Natural killer cell (primary cell): ENCODE measurements at regions of chr3 and their contacts with region 1.

Region 1: GRCh38 chr3:185764163-185764979 is 60.5 kb downstream of the IGF2BP2 start:
- DNase-seq: no peak
- ATAC-seq: peak in 1 of 3 donors; percentile 39
- H3K4me3 ChIP-seq: no peak overlapping the region
- H3K4me3 Mint-ChIP-seq: no peak overlapping the region
- H3K27ac ChIP-seq: no peak overlapping the region
- H3K27ac Mint-ChIP-seq: no peak overlapping the region
- H3K4me1 ChIP-seq: no peaks in the 10 kb centered on the region
- H3K4me1 Mint-ChIP-seq: peaks cover 0 to 51% of the 10 kb centered on the region in 2 donors
- H3K27me3 ChIP-seq: no peaks in the 10 kb centered on the region
- H3K27me3 Mint-ChIP-seq: peaks cover 0 to 6% of the 10 kb centered on the region in 2 donors
- CTCF ChIP-seq: no peak

Region 2: GRCh38 chr3:185585859-185586685 is 178.3 kb before region 1 on chr3 and contains the start of gene SENP2:
- intact Hi-C with region 1: loop called (anchors 10 kb)
- DNase-seq: peak; percentile 100
- ATAC-seq: peak; percentile 80 to 93 (median 85)
- H3K4me3 ChIP-seq: peak within 1 kb of the TSS; percentile 98
- H3K4me3 Mint-ChIP-seq: peak within 1 kb of the TSS; percentile 92
- H3K27ac ChIP-seq: peak within 1 kb of the TSS; percentile 99
- H3K27ac Mint-ChIP-seq: peak within 1 kb of the TSS; percentile 93 to 98
- H3K4me1 ChIP-seq: peaks cover 40% of the 10 kb centered on the region
- H3K4me1 Mint-ChIP-seq: peaks cover 47 to 50% of the 10 kb centered on the region in 2 donors
- H3K27me3 ChIP-seq: no peaks in the 10 kb centered on the region
- H3K27me3 Mint-ChIP-seq: no peaks in the 10 kb centered on the region
- CTCF ChIP-seq: no peak
- total RNA-seq, gene SENP2: 57.8 to 59.8 (median 58.7) TPM

Region 3: GRCh38 chr3:185659942-185660921 is 104.1 kb before region 1 on chr3:
- intact Hi-C with region 1: loop called (anchors 1 kb)
- DNase-seq: peak; percentile 67 to 77
- ATAC-seq: peak; percentile 84 to 90 (median 88)
- H3K4me3 ChIP-seq: no peak overlapping the region
- H3K4me3 Mint-ChIP-seq: peak overlapping the region; percentile 31
- H3K27ac ChIP-seq: no peak overlapping the region
- H3K27ac Mint-ChIP-seq: peak overlapping the region; percentile 21 to 40
- H3K4me1 ChIP-seq: peaks cover 17% of the 10 kb centered on the region
- H3K4me1 Mint-ChIP-seq: peaks cover 20 to 39% of the 10 kb centered on the region in 2 donors
- H3K27me3 ChIP-seq: no peaks in the 10 kb centered on the region
- H3K27me3 Mint-ChIP-seq: peaks cover 9 to 10% of the 10 kb centered on the region in 2 donors
- CTCF ChIP-seq: peak; percentile 95

Region 4: GRCh38 chr3:185677146-185677829 is 87.1 kb before region 1 on chr3:
- intact Hi-C with region 1: loop called (anchors 1 kb)
- DNase-seq: no peak
- ATAC-seq: peak in 2 of 3 donors; percentile 68 to 78
- H3K4me3 ChIP-seq: no peak overlapping the region
- H3K4me3 Mint-ChIP-seq: no peak overlapping the region
- H3K27ac ChIP-seq: no peak overlapping the region
- H3K27ac Mint-ChIP-seq: no peak overlapping the region
- H3K4me1 ChIP-seq: no peaks in the 10 kb centered on the region
- H3K4me1 Mint-ChIP-seq: no peaks in the 10 kb centered on the region
- H3K27me3 ChIP-seq: peaks cover 2% of the 10 kb centered on the region
- H3K27me3 Mint-ChIP-seq: no peaks in the 10 kb centered on the region
- CTCF ChIP-seq: peak; percentile 65